Endothelial cell of umbilical vein (primary cell): ENCODE measurements at regions of chr14 and their contacts with region 1.

Region 1: GRCh38 chr14:24806061-24806678 is 172.2 kb upstream of the GZMB start:
- DNase-seq: peak; percentile 51
- H3K4me3 ChIP-seq: no peak overlapping the region
- H3K27ac ChIP-seq: no peak overlapping the region
- H3K4me1 ChIP-seq: no peaks in the 10 kb centered on the region
- H3K27me3 ChIP-seq: peaks cover 2 to 4% of the 10 kb centered on the region in 2 experiments
- CTCF ChIP-seq: peak; percentile 72 to 80
- POLR2A ChIP-seq: no peak

Region 2: DNA sequence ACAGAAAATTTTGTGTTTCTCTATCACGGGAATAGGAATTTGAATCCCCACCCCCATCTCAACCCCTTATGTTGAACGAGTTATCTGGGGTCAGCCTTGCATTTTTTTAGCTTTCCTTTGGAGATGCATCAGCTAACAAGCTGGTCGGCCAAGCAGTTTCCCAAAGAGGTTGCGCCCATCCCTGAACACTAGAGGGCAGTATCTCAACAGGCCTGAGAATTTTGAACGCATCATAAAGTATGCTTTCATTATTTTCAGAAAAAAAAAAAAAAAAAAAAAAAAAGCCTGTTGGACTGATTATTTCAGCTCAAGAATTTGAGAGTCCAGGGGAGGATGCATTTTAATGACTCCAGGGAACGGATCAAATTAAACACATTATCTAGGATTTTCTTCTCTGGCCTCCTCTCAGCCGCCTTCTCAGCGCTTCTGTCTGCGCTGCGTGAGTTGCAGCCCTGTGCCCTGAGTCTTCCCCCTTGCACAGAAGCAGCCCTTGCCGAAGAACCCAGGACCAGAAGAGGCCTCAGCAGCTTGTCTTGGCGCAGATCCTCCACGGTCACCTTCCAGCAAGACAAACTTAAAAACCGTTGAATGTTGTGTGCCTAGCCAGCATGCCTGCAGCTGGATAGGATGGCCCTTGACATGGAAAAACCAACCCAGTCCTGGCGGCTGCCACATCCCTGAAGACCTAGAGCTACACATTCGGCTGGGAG is 95.6 kb before region 1 on chr14:
- CTCF ChIA-PET with region 1: interaction called, 11 read pairs
- POLR2A ChIA-PET with region 1: no interaction called
- dilution Hi-C with region 1: no loop called
- intact Hi-C with region 1: no loop called
- DNase-seq: peak; percentile 48
- H3K4me3 ChIP-seq: no peak overlapping the region
- H3K27ac ChIP-seq: no peak overlapping the region
- H3K4me1 ChIP-seq: no peaks in the 10 kb centered on the region
- H3K27me3 ChIP-seq: no peaks in the 10 kb centered on the region
- CTCF ChIP-seq: peak; percentile 67 to 85
- POLR2A ChIP-seq: no peak

Region 3: GRCh38 chr14:24900269-24901100 is 94.3 kb after region 1 on chr14:
- CTCF ChIA-PET with region 1: no interaction called
- POLR2A ChIA-PET with region 1: no interaction called
- dilution Hi-C with region 1: no loop called
- intact Hi-C with region 1: no loop called
- DNase-seq: no peak
- H3K4me3 ChIP-seq: no peak overlapping the region
- H3K27ac ChIP-seq: no peak overlapping the region
- H3K4me1 ChIP-seq: no peaks in the 10 kb centered on the region
- H3K27me3 ChIP-seq: no peaks in the 10 kb centered on the region
- CTCF ChIP-seq: no peak
- POLR2A ChIP-seq: no peak

Region 4: GRCh38 chr14:25042362-25043299 is 236.5 kb after region 1 on chr14:
- CTCF ChIA-PET with region 1: interaction called, 5 read pairs
- POLR2A ChIA-PET with region 1: no interaction called
- dilution Hi-C with region 1: no loop called
- intact Hi-C with region 1: loop called (anchors 2 kb)
- DNase-seq: peak; percentile 8
- H3K4me3 ChIP-seq: no peak overlapping the region
- H3K27ac ChIP-seq: no peak overlapping the region
- H3K4me1 ChIP-seq: no peaks in the 10 kb centered on the region
- H3K27me3 ChIP-seq: peaks cover under 1 to 5% of the 10 kb centered on the region in 2 experiments
- CTCF ChIP-seq: peak in 1 of 2 donors; percentile 27
- POLR2A ChIP-seq: no peak

Region 5: GRCh38 chr14:25132732-25133422 is 326.7 kb after region 1 on chr14:
- CTCF ChIA-PET with region 1: interaction called, 74 read pairs
- POLR2A ChIA-PET with region 1: no interaction called
- dilution Hi-C with region 1: no loop called
- intact Hi-C with region 1: loop called (anchors 1 kb)
- DNase-seq: peak; percentile 39
- H3K4me3 ChIP-seq: no peak overlapping the region
- H3K27ac ChIP-seq: no peak overlapping the region
- H3K4me1 ChIP-seq: no peaks in the 10 kb centered on the region
- H3K27me3 ChIP-seq: peaks cover 0 to 4% of the 10 kb centered on the region in 2 experiments
- CTCF ChIP-seq: peak; percentile 74 to 81
- POLR2A ChIP-seq: no peak

Region 6: GRCh38 chr14:25150934-25151790 is 345.0 kb after region 1 on chr14:
- CTCF ChIA-PET with region 1: interaction called, 16 read pairs
- POLR2A ChIA-PET with region 1: no interaction called
- dilution Hi-C with region 1: no loop called
- intact Hi-C with region 1: loop called (anchors 1 kb)
- DNase-seq: peak; percentile 43
- H3K4me3 ChIP-seq: no peak overlapping the region
- H3K27ac ChIP-seq: no peak overlapping the region
- H3K4me1 ChIP-seq: no peaks in the 10 kb centered on the region
- H3K27me3 ChIP-seq: no peaks in the 10 kb centered on the region
- CTCF ChIP-seq: peak; percentile 42 to 49
- POLR2A ChIP-seq: no peak

Region 7: DNA sequence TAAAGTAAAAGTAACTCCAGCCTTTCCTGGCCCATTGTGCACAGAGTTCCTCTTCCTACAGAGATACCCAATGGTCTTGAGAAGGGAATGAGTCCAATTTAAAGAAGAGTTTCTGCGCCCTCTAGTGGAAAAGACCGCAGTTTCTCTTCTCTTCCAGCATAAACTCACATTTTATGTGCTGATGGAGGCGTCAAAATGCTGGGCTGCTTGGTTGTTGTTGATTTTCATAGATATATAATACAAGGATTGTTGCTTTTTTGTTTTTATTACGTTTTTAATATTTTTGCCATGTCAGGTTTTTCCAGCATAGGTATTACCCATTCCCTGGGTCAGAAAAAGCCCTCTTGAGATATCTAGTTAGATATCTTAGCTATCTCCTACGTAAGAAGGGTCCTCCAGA is 600.6 kb after region 1 on chr14:
- CTCF ChIA-PET with region 1: interaction called, 61 read pairs
- POLR2A ChIA-PET with region 1: no interaction called
- dilution Hi-C with region 1: no loop called
- intact Hi-C with region 1: loop called (anchors 2 kb)
- DNase-seq: peak; percentile 48
- H3K4me3 ChIP-seq: no peak overlapping the region
- H3K27ac ChIP-seq: no peak overlapping the region
- H3K4me1 ChIP-seq: no peaks in the 10 kb centered on the region
- H3K27me3 ChIP-seq: no peaks in the 10 kb centered on the region
- CTCF ChIP-seq: peak; percentile 59 to 63
- POLR2A ChIP-seq: no peak

Region 8: DNA sequence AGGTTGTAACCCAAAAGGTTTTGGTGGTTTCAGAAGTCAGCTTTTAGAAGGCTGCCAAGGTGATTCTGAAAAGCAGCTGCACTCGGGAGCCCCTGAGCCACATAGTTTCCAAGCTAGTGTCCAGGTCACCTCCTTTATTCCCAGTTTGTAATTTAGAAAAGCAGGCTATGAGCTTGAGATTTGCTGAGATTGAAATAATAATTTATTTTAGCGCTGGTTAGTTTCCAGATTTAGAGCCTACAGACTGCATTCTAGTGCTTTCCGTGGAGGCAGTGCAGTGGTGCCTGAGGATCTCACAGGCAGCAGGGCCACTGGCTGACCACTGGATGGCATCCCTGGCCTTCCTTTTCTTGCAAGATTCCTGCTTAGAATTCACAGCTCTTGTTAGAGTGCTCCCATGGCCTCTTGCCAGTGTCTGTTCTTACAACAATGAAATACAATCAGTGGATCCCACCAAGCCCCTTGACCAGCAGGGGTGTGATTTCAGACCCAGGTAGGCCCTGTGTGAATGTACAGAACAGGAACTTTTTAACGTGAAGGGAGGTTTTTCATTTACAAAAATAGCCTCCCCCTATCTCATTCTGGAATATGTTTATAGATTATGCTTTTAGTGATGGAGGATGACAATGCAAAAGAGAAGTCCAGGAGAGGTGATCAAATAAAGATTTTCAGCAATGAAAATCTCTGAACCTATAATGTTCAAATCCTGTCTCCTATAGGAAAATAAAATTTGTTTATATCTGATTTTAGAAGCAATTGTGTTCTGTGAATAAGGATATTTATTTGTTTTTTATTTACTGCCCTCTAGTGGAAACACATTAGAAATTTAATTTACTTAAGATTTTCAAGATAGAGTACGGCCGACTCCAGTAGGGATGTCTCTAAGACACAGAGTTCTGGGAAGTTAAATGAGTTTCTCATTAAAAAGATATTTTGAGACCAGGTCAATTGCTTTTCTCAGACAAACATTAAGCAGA is 605.9 kb after region 1 on chr14:
- CTCF ChIA-PET with region 1: interaction called, 61 read pairs
- POLR2A ChIA-PET with region 1: no interaction called
- dilution Hi-C with region 1: no loop called
- intact Hi-C with region 1: loop called (anchors 2 kb)
- DNase-seq: no peak
- H3K4me3 ChIP-seq: no peak overlapping the region
- H3K27ac ChIP-seq: no peak overlapping the region
- H3K4me1 ChIP-seq: no peaks in the 10 kb centered on the region
- H3K27me3 ChIP-seq: no peaks in the 10 kb centered on the region
- CTCF ChIP-seq: peak; percentile 5 to 16
- POLR2A ChIP-seq: no peak